Caco-2 (cell line): ENCODE measurements at regions of chr16 and their contacts with region 1.

Region 1: GRCh38 chr16:81314603-81315270 is at the start of gene GAN:
- DNase-seq: peak; percentile 98
- H3K4me3 ChIP-seq: peak within 1 kb of the TSS; percentile 76
- H3K4me3 Mint-ChIP-seq: peak within 1 kb of the TSS; percentile 87
- H3K27ac Mint-ChIP-seq: peak within 1 kb of the TSS; percentile 86
- H3K4me1 ChIP-seq: peaks cover 9% of the 10 kb centered on the region
- H3K4me1 Mint-ChIP-seq: peaks cover 25% of the 10 kb centered on the region
- H3K27me3 ChIP-seq: no peaks in the 10 kb centered on the region
- H3K27me3 Mint-ChIP-seq: no peaks in the 10 kb centered on the region
- CTCF ChIP-seq: no peak
- total RNA-seq, gene GAN: 27.5 and 29.3 TPM in 2 replicates

Region 2: DNA sequence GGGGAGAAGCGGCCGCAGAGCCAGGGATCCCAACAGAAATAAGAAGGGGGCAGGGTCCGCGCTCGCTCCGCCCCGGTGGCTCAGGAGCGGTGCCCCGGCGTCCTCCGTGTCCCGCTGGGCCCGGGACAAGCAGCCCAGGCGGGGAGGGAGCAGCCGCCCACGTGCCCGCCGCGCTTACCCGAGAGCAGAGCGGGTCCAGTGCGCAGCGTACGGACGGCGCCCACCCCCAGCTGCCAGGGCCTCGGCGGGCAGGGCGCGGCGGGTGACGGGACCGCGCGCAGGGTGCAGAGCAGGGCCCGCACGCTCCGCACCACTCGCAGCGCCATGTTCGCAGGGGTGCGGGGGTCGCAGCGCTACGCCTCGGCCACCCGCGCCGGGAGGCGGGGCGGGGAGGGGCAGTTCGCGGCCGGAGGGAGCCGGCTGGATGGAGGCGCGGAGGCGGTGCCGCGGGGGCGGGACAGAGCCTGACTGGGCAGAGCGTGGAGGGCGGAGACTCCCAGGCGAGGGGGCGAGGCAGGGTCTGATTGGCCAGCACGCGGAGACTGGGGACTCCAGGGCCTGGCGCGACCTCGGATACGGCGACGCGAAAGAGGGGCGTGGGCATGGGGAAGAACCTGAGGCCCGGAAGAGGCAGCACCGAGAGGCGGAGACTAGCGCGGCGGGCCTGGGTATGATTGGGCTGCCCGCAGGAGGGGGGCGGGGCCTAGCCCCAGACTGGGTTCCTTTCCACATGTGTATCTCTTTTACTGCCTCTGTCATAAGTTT is 218.6 kb before region 1 on chr16 and contains the start of gene GCSH:
- CTCF ChIA-PET with region 1: no interaction called
- POLR2A ChIA-PET with region 1: no interaction called
- intact Hi-C with region 1: loop called (anchors 10 kb)
- DNase-seq: peak; percentile 100
- H3K4me3 ChIP-seq: peak within 1 kb of the TSS; percentile 97
- H3K4me3 Mint-ChIP-seq: peak within 1 kb of the TSS; percentile 73
- H3K27ac Mint-ChIP-seq: peak within 1 kb of the TSS; percentile 74
- H3K4me1 ChIP-seq: 0 out of 2 replicates have a peak, but pooled peaks cover 3% of the 10 kb centered on the region
- H3K4me1 Mint-ChIP-seq: peaks cover 7% of the 10 kb centered on the region
- H3K27me3 ChIP-seq: no peaks in the 10 kb centered on the region
- H3K27me3 Mint-ChIP-seq: no peaks in the 10 kb centered on the region
- CTCF ChIP-seq: no peak
- total RNA-seq, gene GCSH: 105 and 115 TPM in 2 replicates

Region 3: DNA sequence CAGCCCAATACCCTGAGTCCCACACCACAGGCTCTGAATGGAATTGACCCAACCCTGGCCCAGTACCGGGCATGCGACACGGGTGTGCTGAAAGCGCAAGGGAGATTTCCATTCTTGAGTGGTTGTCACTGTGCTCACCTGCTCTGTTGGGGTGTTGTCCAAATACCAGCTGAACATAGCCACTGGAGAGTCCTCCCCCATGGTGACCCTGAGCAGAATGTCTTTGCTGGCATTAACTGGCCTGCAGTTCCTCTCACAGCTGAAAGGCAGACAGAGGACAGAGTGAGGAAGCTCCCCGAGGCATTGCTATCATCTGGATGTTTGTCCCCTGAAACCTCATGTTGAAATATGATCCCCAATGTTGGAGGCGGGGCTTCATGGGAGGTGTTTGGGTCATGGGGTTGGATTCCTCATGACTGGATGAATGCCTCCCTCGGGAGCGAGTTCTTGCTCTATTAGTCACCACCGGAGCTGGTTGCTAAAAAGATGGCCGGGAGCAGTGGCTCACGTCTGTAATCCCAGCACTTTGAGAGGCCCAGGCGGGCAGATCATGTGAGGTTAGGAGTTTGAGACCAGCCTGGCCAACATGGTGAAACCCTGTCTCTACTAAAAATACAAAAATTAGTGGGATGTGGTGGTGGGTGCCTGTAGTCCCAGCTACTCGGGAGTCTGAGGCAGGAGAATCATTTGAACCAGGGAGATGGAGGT is 133.6 kb before region 1 on chr16:
- CTCF ChIA-PET with region 1: no interaction called
- POLR2A ChIA-PET with region 1: interaction called, 23 read pairs
- intact Hi-C with region 1: no loop called
- DNase-seq: peak; percentile 91 to 96
- H3K4me3 ChIP-seq: no peak overlapping the region
- H3K4me3 Mint-ChIP-seq: peak overlapping the region; percentile 64
- H3K27ac Mint-ChIP-seq: peak overlapping the region; percentile 95
- H3K4me1 ChIP-seq: peaks cover 12% of the 10 kb centered on the region
- H3K4me1 Mint-ChIP-seq: peaks cover 15% of the 10 kb centered on the region
- H3K27me3 ChIP-seq: no peaks in the 10 kb centered on the region
- H3K27me3 Mint-ChIP-seq: no peaks in the 10 kb centered on the region
- CTCF ChIP-seq: no peak

Region 4: GRCh38 chr16:81204798-81205680 is 109.7 kb before region 1 on chr16:
- CTCF ChIA-PET with region 1: interaction called, 8 read pairs
- POLR2A ChIA-PET with region 1: no interaction called
- intact Hi-C with region 1: loop called (anchors 1 kb)
- DNase-seq: peak in 1 of 2 experiments; percentile 55
- H3K4me3 ChIP-seq: no peak overlapping the region
- H3K4me3 Mint-ChIP-seq: no peak overlapping the region
- H3K27ac Mint-ChIP-seq: no peak overlapping the region
- H3K4me1 ChIP-seq: no peaks in the 10 kb centered on the region
- H3K4me1 Mint-ChIP-seq: peaks cover 6% of the 10 kb centered on the region
- H3K27me3 ChIP-seq: no peaks in the 10 kb centered on the region
- H3K27me3 Mint-ChIP-seq: peaks cover 2% of the 10 kb centered on the region
- CTCF ChIP-seq: peak; percentile 80

Region 5: DNA sequence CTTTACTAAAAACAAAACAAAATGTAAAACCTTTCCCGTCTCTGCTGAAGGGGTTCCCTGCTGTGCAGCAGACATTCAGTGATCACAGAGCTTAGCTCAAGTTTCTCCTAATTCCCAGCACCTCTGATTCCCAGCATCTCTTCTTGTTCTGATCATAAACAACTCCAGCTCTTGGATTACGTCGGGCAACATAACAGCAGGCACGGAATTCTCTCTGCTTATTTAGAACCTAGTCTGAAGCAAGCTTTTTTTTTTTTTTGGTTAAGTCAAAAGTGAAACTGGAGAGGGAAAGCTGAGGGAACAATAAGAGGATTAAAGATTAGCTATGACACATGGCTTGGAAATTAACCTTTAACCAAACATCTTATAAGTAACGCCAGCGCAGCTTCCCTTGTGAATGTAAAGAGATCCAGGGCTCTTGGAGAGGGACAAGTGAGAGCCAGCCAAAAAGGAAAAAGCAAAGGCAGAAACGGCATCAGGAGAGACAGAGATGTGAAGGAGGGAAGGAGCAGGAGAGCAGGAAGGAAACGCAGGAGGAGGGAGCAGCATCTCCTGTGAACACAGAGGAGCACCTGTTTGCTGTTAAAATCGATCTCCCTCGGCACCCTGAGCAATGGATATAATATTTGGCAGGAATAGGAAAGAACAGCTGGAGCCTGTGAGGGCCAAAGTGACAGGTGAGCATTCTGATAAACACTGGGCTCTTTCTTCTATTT is 76.3 kb before region 1 on chr16 and contains the start of gene BCO1:
- CTCF ChIA-PET with region 1: no interaction called
- POLR2A ChIA-PET with region 1: interaction called, 8 read pairs
- intact Hi-C with region 1: loop called (anchors 2 kb)
- DNase-seq: peak in 1 of 2 experiments; percentile 40
- H3K4me3 ChIP-seq: peak within 1 kb of the TSS; percentile 13
- H3K4me3 Mint-ChIP-seq: peak within 1 kb of the TSS; percentile 75
- H3K27ac Mint-ChIP-seq: peak within 1 kb of the TSS; percentile 77
- H3K4me1 ChIP-seq: peaks cover 9% of the 10 kb centered on the region
- H3K4me1 Mint-ChIP-seq: peaks cover 17% of the 10 kb centered on the region
- H3K27me3 ChIP-seq: no peaks in the 10 kb centered on the region
- H3K27me3 Mint-ChIP-seq: no peaks in the 10 kb centered on the region
- CTCF ChIP-seq: no peak
- total RNA-seq, gene BCO1: 0.91 and 1.0 TPM in 2 replicates

Region 6: GRCh38 chr16:81261049-81261648 is 53.6 kb before region 1 on chr16:
- CTCF ChIA-PET with region 1: interaction called, 4 read pairs
- POLR2A ChIA-PET with region 1: no interaction called
- intact Hi-C with region 1: loop called (anchors 5 kb)
- DNase-seq: peak in 1 of 2 experiments; percentile 35
- H3K4me3 ChIP-seq: no peak overlapping the region
- H3K4me3 Mint-ChIP-seq: no peak overlapping the region
- H3K27ac Mint-ChIP-seq: no peak overlapping the region
- H3K4me1 ChIP-seq: no peaks in the 10 kb centered on the region
- H3K4me1 Mint-ChIP-seq: no peaks in the 10 kb centered on the region
- H3K27me3 ChIP-seq: no peaks in the 10 kb centered on the region
- H3K27me3 Mint-ChIP-seq: no peaks in the 10 kb centered on the region
- CTCF ChIP-seq: peak; percentile 52 to 76

Region 7: DNA sequence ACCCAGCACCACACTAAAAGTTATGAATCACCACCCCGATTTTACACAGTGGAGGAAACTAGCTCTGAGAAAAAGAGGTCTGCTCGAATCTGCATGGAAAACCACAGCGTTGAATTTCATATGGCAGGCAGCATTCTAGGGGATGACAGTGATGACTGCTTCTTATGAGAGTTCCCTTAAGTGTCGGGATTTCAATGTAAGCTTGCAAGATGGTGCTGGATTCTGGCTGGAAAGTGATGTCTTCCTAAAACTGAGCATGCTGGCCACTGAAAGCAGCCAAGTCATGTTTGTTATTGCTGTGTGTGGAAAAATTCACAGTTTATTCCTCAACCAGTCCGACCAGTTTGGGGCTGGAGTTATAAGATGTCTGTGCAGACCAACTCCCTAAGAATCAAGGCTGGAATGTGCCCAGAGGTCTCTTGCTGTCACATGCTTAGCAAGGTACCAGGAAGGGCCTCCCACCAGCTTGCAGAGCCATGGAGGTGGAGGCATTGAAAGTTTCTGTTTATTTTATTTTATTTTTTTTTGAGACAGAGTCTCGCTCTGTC is 37.1 kb before region 1 on chr16:
- CTCF ChIA-PET with region 1: no interaction called
- POLR2A ChIA-PET with region 1: interaction called, 12 read pairs
- intact Hi-C with region 1: loop called (anchors 1 kb)
- DNase-seq: peak; percentile 87 to 92
- H3K4me3 ChIP-seq: no peak overlapping the region
- H3K4me3 Mint-ChIP-seq: no peak overlapping the region
- H3K27ac Mint-ChIP-seq: peak overlapping the region; percentile 95
- H3K4me1 ChIP-seq: peaks cover 59% of the 10 kb centered on the region
- H3K4me1 Mint-ChIP-seq: peaks cover 37% of the 10 kb centered on the region
- H3K27me3 ChIP-seq: no peaks in the 10 kb centered on the region
- H3K27me3 Mint-ChIP-seq: no peaks in the 10 kb centered on the region
- CTCF ChIP-seq: no peak

Region 8: DNA sequence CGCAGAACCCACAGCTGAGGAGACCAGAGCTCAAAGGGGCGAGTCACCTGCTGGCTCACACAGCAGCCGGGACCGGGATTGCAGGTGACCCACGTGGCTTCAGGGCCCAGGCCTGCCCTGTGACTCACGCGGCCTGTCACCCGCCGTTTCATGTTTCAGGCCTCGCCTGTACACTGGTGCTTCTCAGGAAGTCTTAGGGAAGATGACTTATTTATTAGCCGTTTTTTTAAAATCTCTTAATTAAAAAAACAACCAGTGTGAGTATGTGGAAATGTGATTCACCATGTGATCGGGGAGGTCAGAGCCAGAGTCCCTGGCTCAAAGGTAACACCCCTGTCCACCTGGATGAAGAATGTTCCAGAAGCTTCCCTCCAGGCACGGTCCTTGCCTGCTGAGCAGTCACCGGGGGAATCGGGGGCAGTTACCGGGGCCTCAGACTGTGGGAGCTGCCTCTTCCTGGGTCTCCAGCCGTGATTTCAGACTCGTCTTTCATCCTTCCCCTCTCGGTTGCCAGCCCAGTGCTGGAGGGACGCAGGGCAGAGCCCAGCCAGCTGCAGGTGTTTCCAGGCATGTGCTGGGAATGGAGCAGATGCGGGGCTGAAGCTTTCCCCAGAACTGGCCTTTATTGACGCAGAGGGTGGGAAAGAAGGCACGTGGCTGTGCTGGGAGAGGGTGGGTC is 179.2 kb after region 1 on chr16:
- CTCF ChIA-PET with region 1: no interaction called
- POLR2A ChIA-PET with region 1: no interaction called
- intact Hi-C with region 1: no loop called
- DNase-seq: peak; percentile 73 to 81
- H3K4me3 ChIP-seq: no peak overlapping the region
- H3K4me3 Mint-ChIP-seq: no peak overlapping the region
- H3K27ac Mint-ChIP-seq: peak overlapping the region; percentile 87
- H3K4me1 ChIP-seq: peaks cover 16% of the 10 kb centered on the region
- H3K4me1 Mint-ChIP-seq: peaks cover 21% of the 10 kb centered on the region
- H3K27me3 ChIP-seq: no peaks in the 10 kb centered on the region
- H3K27me3 Mint-ChIP-seq: no peaks in the 10 kb centered on the region
- CTCF ChIP-seq: no peak